HCT116 (cell line): ENCODE measurements at regions of chr7 and their contacts with region 1.

Region 1: DNA sequence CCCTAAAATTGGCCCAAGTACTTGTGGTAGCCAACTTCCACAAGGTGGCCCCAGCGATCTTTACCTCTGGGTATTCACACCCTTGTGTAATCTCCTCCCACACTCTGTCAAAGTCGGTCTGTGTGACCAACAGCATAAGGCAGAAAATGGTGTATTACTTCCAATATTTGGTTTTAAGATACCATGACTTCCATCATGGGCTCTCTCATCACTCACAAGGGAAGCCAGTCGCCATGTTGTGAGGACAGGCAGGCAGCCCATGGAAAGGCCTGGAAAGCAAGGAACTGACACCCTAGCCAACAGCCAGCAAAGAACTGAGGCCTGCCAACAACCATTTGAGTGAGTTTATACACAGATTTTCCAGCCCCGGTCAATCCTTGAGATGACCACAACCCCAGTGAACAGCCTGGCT is 91.0 kb upstream of the KMT2E start:
- DNase-seq: peak; percentile 87
- ATAC-seq: peak; percentile 96
- H3K4me3 ChIP-seq: no peak overlapping the region
- H3K27ac ChIP-seq: no peak overlapping the region
- H3K4me1 ChIP-seq: peaks cover 0 to 4% of the 10 kb centered on the region in 2 experiments; a peak in 1 of 4 replicates
- H3K27me3 ChIP-seq: no peaks in the 10 kb centered on the region
- CTCF ChIP-seq: peak; percentile 80 to 86 (median 83)
- POLR2A ChIP-seq: no peak
- RAD21 ChIP-seq: peak; percentile 98

Region 2: DNA sequence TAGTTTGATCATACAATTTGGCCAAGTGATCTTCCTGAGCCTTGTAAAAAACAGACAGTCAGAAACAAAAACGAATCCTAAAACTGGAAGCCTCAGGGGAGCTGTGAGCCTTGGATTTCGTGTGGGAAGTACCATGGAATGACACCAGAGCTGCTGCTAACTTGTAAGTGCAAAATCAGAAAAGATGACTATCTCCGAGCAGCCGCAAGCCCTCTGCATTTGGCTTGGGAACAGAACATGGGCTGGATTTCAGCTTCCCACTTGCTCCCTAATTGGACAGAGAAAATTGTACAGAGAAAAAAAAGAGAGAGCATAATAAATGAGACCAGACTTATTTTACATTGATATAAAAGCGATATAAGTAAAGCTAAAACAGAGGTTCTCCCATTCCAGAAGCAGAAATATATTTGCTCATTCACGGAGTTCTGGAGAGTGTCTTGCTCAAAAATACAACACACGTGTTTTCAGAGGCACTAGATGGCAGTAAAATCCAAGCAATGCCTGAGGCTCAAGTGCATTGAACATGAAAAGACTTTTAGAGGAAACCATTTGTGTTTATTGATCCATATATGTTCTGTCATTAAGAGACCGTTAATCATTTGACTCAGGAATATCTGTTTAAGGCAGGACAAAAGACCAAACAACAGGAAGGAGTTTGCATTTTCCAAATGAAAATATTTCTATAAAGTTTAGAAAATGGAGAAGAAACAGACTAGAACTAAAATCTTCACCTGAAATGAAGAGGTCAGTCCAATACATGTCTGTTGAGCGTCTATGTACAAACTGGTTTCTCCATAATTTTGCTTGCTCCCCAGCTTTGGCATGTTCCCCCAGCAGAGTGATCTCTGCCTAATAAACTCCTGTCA is 1398.7 kb before region 1 on chr7:
- CTCF ChIA-PET with region 1: no interaction called
- POLR2A ChIA-PET with region 1: no interaction called
- RAD21 ChIA-PET with region 1: interaction called in 1 of 2 experiments, 3 read pairs
- intact Hi-C with region 1: loop called (anchors 1 kb)
- DNase-seq: peak; percentile 12
- ATAC-seq: peak; percentile 62
- H3K4me3 ChIP-seq: no peak overlapping the region
- H3K27ac ChIP-seq: no peak overlapping the region
- H3K4me1 ChIP-seq: no peaks in the 10 kb centered on the region
- H3K27me3 ChIP-seq: peaks cover 57% of the 10 kb centered on the region
- CTCF ChIP-seq: peak; percentile 19 to 44 (median 25); a peak in 3 of 6 replicates
- POLR2A ChIP-seq: no peak
- RAD21 ChIP-seq: peak; percentile 64

Region 3: GRCh38 chr7:104231054-104232046 is 691.7 kb before region 1 on chr7:
- CTCF ChIA-PET with region 1: interaction called, 24 read pairs
- POLR2A ChIA-PET with region 1: no interaction called
- RAD21 ChIA-PET with region 1: interaction called, 4 to 5 read pairs
- intact Hi-C with region 1: loop called (anchors 2 kb)
- DNase-seq: peak; percentile 36
- ATAC-seq: peak; percentile 98
- H3K4me3 ChIP-seq: no peak overlapping the region
- H3K27ac ChIP-seq: no peak overlapping the region
- H3K4me1 ChIP-seq: no peaks in the 10 kb centered on the region
- H3K27me3 ChIP-seq: peaks cover 12% of the 10 kb centered on the region; the same call in 1 of the 2 replicates
- CTCF ChIP-seq: peak; percentile 54 to 87 (median 85)
- POLR2A ChIP-seq: no peak
- RAD21 ChIP-seq: peak; percentile 79

Region 4: DNA sequence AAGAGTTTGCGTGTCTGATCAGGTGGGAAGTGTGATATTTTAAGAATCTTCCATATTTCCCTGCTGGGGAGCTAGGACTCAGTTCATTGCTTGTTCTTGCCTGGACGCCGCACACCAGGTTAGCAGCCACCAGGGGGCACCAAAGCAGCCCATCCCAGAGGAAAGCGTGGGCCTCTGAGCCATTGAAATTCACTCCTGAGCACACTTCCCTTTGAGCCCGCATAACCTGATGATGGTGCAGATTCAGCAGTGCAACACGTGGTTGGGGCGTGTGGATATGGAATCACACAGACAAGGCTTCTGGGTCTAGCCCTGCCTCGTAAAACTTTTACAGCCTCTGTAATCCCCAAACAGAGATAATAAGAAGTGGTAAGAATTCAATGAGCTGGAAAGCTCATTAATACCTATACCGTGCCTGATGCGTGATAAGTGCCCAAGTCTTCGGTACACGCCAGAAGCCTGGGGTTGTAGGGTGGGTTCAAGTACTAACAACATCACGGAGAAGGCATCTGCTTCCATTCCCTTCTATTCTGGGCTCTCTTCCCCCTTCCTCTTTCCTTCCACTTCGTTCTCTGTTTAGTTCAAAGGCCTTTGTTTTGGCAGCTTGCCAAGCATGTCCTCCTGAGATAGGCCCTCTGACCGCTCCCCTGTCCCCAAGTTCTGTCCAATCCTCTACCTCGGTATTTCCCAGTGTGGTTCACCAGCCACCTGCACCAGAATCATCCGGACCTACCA is 39.1 kb before region 1 on chr7:
- CTCF ChIA-PET with region 1: interaction called, 51 read pairs
- POLR2A ChIA-PET with region 1: interaction called, 6 read pairs
- RAD21 ChIA-PET with region 1: interaction called, 5 to 19 read pairs
- intact Hi-C with region 1: loop called (anchors 1 kb)
- DNase-seq: peak; percentile 84
- ATAC-seq: peak; percentile 99
- H3K4me3 ChIP-seq: no peak overlapping the region
- H3K27ac ChIP-seq: no peak overlapping the region
- H3K4me1 ChIP-seq: peaks cover 3 to 11% of the 10 kb centered on the region in 2 experiments; a peak in 3 of 4 replicates
- H3K27me3 ChIP-seq: no peaks in the 10 kb centered on the region
- CTCF ChIP-seq: peak; percentile 79 to 97 (median 96)
- POLR2A ChIP-seq: no peak
- RAD21 ChIP-seq: peak; percentile 76

Region 5: DNA sequence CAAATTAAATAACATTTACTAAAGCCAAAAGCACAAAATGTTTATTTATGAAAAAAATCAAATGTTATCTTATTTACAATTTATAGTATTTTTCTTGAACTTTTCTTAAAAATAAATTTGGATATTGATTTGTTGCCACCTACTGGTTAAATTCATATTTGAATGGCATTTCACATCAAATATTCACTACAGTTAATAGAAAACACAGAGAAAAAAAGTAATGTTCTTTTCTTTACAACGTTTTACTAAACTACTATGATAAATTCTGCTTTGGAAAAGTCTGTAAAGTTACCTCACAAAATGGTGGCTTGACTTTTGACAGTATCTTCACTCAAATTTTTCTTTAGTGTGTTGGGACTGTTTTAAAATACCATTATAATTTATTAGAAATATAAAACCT is 413.0 kb after region 1 on chr7:
- CTCF ChIA-PET with region 1: no interaction called
- POLR2A ChIA-PET with region 1: no interaction called
- RAD21 ChIA-PET with region 1: no interaction called
- intact Hi-C with region 1: loop called (anchors 10 kb)
- DNase-seq: no peak
- ATAC-seq: no peak
- H3K4me3 ChIP-seq: no peak overlapping the region
- H3K27ac ChIP-seq: no peak overlapping the region
- H3K4me1 ChIP-seq: peaks cover 3 to 4% of the 10 kb centered on the region in 2 experiments; a peak in 2 of 4 replicates
- H3K27me3 ChIP-seq: no peaks in the 10 kb centered on the region
- CTCF ChIP-seq: peak; percentile 7 to 37 (median 33); a peak in 2 of 6 replicates
- POLR2A ChIP-seq: no peak
- RAD21 ChIP-seq: peak; percentile 66

Region 6: GRCh38 chr7:105487579-105488571 is 564.9 kb after region 1 on chr7:
- CTCF ChIA-PET with region 1: no interaction called
- POLR2A ChIA-PET with region 1: no interaction called
- RAD21 ChIA-PET with region 1: no interaction called
- intact Hi-C with region 1: loop called (anchors 5 kb)
- DNase-seq: no peak
- ATAC-seq: peak; percentile 64; the same call in 1 of the 2 replicates
- H3K4me3 ChIP-seq: no peak overlapping the region
- H3K27ac ChIP-seq: no peak overlapping the region
- H3K4me1 ChIP-seq: no peaks in the 10 kb centered on the region
- H3K27me3 ChIP-seq: no peaks in the 10 kb centered on the region
- CTCF ChIP-seq: peak; percentile 16 to 39 (median 31); a peak in 3 of 6 replicates
- POLR2A ChIP-seq: no peak
- RAD21 ChIP-seq: peak; percentile 59

Region 7: GRCh38 chr7:105975770-105976422 is 1052.9 kb after region 1 on chr7:
- CTCF ChIA-PET with region 1: no interaction called
- POLR2A ChIA-PET with region 1: no interaction called
- RAD21 ChIA-PET with region 1: no interaction called
- intact Hi-C with region 1: no loop called
- DNase-seq: no peak
- ATAC-seq: no peak
- H3K4me3 ChIP-seq: no peak overlapping the region
- H3K27ac ChIP-seq: no peak overlapping the region
- H3K4me1 ChIP-seq: no peaks in the 10 kb centered on the region
- H3K27me3 ChIP-seq: no peaks in the 10 kb centered on the region
- CTCF ChIP-seq: no peak
- POLR2A ChIP-seq: no peak
- RAD21 ChIP-seq: no peak